ENCODE measurements at regions of chr12 and their contacts with region 1.

Region 1: GRCh38 chr12:98572010-98572409 is 21.5 kb upstream of the SLC25A3 start:
- DNase-seq: no peak
- H3K4me3 Mint-ChIP-seq: no peak overlapping the region
- H3K27ac Mint-ChIP-seq: no peak overlapping the region
- H3K4me1 Mint-ChIP-seq: no peaks in the 10 kb centered on the region
- H3K27me3 Mint-ChIP-seq: no peaks in the 10 kb centered on the region
- CTCF ChIP-seq: peak; percentile 23

Region 2: GRCh38 chr12:98332642-98333041 is 239.4 kb before region 1 on chr12:
- CTCF ChIA-PET with region 1: no interaction called
- intact Hi-C with region 1: no loop called
- DNase-seq: no peak
- H3K4me3 Mint-ChIP-seq: no peak overlapping the region
- H3K27ac Mint-ChIP-seq: no peak overlapping the region
- H3K4me1 Mint-ChIP-seq: no peaks in the 10 kb centered on the region
- H3K27me3 Mint-ChIP-seq: peaks cover 45% of the 10 kb centered on the region
- CTCF ChIP-seq: no peak

Region 3: DNA sequence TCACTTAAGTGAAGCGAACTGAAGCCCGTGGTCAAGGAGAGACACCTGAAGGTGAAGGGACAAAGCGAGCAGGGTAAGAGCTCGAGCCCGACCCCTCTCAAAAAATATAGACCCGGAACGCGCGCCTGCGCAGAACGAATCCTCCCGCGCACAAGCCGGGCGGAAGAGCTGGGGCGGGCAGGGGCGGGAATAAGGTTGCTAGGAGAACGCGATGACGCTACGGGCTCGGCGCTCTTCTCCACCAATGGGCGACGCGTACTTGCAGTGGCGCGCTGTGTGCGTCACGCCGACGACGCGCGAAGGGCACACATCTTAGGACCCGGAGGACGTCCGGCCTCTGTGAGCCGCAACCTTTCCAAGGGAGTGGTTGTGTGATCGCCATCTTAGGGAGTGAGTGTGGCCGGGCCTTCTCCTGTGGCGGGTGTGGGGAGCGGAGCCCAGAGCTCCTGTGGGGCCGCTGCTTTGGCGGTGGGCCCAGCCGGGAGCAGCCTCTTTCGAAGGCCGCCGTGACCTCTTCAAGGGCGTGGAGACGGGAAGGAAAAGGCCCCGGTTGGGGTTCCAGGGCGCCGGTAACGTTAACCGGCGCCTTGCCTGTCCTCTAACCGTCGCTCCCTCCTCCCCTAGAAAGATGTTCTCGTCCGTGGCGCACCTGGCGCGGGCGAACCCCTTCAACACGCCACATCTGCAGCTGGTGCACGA is 21.5 kb after region 1 on chr12 and contains the start of gene SLC25A3:
- CTCF ChIA-PET with region 1: interaction called, 35 read pairs
- intact Hi-C with region 1: loop called (anchors 2 kb)
- DNase-seq: peak; percentile 95
- H3K4me3 Mint-ChIP-seq: peak within 1 kb of the TSS; percentile 92
- H3K27ac Mint-ChIP-seq: peak within 1 kb of the TSS; percentile 99
- H3K4me1 Mint-ChIP-seq: peaks cover 18% of the 10 kb centered on the region
- H3K27me3 Mint-ChIP-seq: no peaks in the 10 kb centered on the region
- CTCF ChIP-seq: no peak
- total RNA-seq, gene SLC25A3: 486 and 520 TPM in 2 replicates

Region 4: GRCh38 chr12:98644711-98645402 is 72.8 kb after region 1 on chr12 and contains the starts of genes APAF1 and IKBIP:
- CTCF ChIA-PET with region 1: interaction called, 7 read pairs
- intact Hi-C with region 1: loop called (anchors 2 kb)
- DNase-seq: peak; percentile 99
- H3K4me3 Mint-ChIP-seq: peak within 1 kb of the TSS; percentile 97
- H3K27ac Mint-ChIP-seq: peak within 1 kb of the TSS; percentile 80
- H3K4me1 Mint-ChIP-seq: peaks cover 6% of the 10 kb centered on the region
- H3K27me3 Mint-ChIP-seq: no peaks in the 10 kb centered on the region
- CTCF ChIP-seq: no peak
- total RNA-seq, gene APAF1: 24.7 and 28.5 TPM in 2 replicates
- total RNA-seq, gene IKBIP: 21.7 and 24.7 TPM in 2 replicates

Region 5: DNA sequence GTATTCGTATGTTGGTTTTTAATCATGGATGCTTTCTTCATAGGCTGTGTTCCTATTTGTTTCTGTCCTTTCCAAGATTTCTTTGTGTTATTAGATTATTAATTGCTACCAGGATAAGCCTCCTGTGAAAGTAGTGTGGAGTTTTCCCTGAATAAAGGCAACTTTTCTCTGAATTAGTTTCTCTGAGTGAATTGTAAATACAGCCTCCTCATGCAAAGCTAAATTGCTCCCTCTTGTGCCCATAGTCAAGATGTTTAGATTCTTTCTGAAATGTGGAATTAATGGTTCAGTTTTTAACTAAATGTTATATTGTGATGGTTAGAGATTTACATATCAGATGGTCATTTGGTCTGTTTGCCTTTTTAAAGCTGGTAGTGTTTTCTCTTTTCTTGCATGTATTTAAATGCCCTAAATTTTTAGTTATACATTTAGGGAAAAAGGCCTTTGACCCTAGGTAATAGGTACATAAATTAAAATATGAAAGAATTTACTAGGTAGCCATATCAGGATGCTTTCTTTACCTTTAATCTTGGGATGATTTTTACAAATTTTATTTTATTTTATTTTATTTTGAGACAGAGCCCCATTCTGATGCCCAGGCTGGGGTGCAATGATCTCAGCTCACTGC is 82.0 kb after region 1 on chr12:
- CTCF ChIA-PET with region 1: interaction called, 10 read pairs
- intact Hi-C with region 1: loop called (anchors 1 kb)
- DNase-seq: peak; percentile 22
- H3K4me3 Mint-ChIP-seq: no peak overlapping the region
- H3K27ac Mint-ChIP-seq: no peak overlapping the region
- H3K4me1 Mint-ChIP-seq: peaks cover 14% of the 10 kb centered on the region
- H3K27me3 Mint-ChIP-seq: no peaks in the 10 kb centered on the region
- CTCF ChIP-seq: peak; percentile 28

Region 6: GRCh38 chr12:98743347-98743953 is 171.4 kb after region 1 on chr12:
- CTCF ChIA-PET with region 1: no interaction called
- intact Hi-C with region 1: loop called (anchors 5 kb)
- DNase-seq: peak; percentile 64
- H3K4me3 Mint-ChIP-seq: no peak overlapping the region
- H3K27ac Mint-ChIP-seq: no peak overlapping the region
- H3K4me1 Mint-ChIP-seq: no peaks in the 10 kb centered on the region
- H3K27me3 Mint-ChIP-seq: peaks cover 63% of the 10 kb centered on the region
- CTCF ChIP-seq: peak; percentile 48

Region 7: GRCh38 chr12:99068993-99069747 is 497.2 kb after region 1 on chr12:
- CTCF ChIA-PET with region 1: no interaction called
- intact Hi-C with region 1: no loop called
- DNase-seq: no peak
- H3K4me3 Mint-ChIP-seq: no peak overlapping the region
- H3K27ac Mint-ChIP-seq: no peak overlapping the region
- H3K4me1 Mint-ChIP-seq: no peaks in the 10 kb centered on the region
- H3K27me3 Mint-ChIP-seq: no peaks in the 10 kb centered on the region
- CTCF ChIP-seq: no peak

Measured in Calu3 (cell line).